Left cardiac atrium (tissue), 4 donors: ENCODE measurements at regions of chr9 and their contacts with region 1.

Region 1: DNA sequence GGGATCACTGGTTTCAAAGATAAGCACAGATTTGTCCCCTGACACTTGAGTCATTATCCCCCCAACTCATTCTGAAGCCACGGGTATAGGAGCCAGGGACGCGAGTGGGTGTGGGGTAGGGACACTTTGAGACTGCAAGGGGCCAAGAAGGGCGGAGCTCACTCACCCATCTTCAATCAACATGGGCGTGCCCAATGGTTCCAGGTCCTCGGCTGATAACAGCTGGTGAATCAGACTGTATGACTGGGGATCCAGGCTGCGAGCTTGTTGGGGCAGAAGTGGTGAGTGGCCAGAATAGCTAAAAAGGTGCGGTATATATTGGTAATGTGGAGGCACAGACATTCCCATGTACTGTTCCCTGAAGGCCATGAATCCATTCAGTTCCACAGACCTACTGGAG is 30.7 kb upstream of the NR5A1 start:
- DNase-seq: no peak
- ATAC-seq: no peak

Region 2: GRCh38 chr9:124419832-124420489 is 118.0 kb before region 1 on chr9:
- intact Hi-C with region 1: loop called (anchors 1 to 2 kb)
- DNase-seq: no peak
- ATAC-seq: peak in 1 of 2 donors; percentile 7